ENCODE measurements at regions of chr17 and their contacts with region 1.

Region 1: GRCh38 chr17:40937384-40937819 is at the start of gene KRT23:
- DNase-seq: peak; percentile 87
- H3K4me3 Mint-ChIP-seq: peak within 1 kb of the TSS; percentile 71
- H3K27ac Mint-ChIP-seq: peak within 1 kb of the TSS; percentile 96
- H3K4me1 Mint-ChIP-seq: peaks cover 43% of the 10 kb centered on the region
- H3K27me3 Mint-ChIP-seq: no peaks in the 10 kb centered on the region
- CTCF ChIP-seq: no peak
- total RNA-seq, gene KRT23: 1,389 and 1,709 TPM in 2 replicates

Region 2: GRCh38 chr17:40915199-40915661 is 22.2 kb before region 1 on chr17:
- CTCF ChIA-PET with region 1: interaction called, 13 read pairs
- intact Hi-C with region 1: loop called (anchors 1 kb)
- DNase-seq: no peak
- H3K4me3 Mint-ChIP-seq: peak overlapping the region; percentile 31
- H3K27ac Mint-ChIP-seq: peak overlapping the region; percentile 96
- H3K4me1 Mint-ChIP-seq: peaks cover 84% of the 10 kb centered on the region
- H3K27me3 Mint-ChIP-seq: no peaks in the 10 kb centered on the region
- CTCF ChIP-seq: no peak

Region 3: DNA sequence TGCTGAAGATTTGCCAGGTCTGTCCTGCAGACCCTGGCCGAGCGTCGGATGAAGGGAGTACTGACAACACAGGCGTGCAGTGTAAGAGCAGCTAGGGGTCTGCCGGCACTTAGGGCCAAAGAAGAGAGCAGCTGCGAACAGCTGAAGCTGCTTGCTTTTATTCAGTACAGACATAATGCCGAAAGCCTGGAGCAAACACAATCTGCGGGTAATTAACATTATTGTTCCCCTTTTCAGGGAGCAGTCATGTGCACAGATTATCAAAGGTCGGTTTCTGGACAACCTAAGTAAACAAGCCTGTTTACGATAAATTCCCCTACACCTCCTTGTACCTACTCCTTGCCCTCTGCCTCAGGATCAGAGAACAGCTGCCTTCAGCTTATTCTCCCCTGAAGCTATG is 12.0 kb after region 1 on chr17:
- CTCF ChIA-PET with region 1: interaction called, 48 read pairs
- intact Hi-C with region 1: loop called (anchors 1 kb)
- DNase-seq: peak; percentile 22
- H3K4me3 Mint-ChIP-seq: peak overlapping the region; percentile 27
- H3K27ac Mint-ChIP-seq: peak overlapping the region; percentile 13
- H3K4me1 Mint-ChIP-seq: peaks cover 90% of the 10 kb centered on the region
- H3K27me3 Mint-ChIP-seq: no peaks in the 10 kb centered on the region
- CTCF ChIP-seq: no peak

Region 4: DNA sequence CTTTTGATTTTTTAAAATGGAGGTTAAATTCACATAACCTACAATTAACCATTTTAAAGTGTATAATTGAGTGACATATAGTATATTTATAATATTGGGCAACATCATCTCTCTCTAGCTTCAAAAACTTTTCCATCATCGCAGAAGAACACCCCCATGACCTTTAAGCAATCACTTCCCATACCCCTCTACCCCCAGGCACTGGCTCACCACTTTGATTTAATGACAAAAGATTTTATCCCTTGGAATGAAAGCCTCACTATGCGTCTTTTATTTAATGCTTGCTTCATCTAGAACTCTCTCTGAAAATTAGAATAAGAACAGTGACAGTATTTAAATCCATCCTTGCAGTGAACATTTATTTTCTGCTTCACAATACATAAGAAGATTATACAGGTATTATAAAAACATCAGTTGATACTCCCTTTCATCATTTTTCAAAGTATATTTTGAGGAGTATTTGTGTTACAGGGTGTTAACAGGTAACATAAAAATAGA is 100.5 kb after region 1 on chr17:
- CTCF ChIA-PET with region 1: interaction called, 7 read pairs
- intact Hi-C with region 1: loop called (anchors 1 kb)
- DNase-seq: no peak
- H3K4me3 Mint-ChIP-seq: no peak overlapping the region
- H3K27ac Mint-ChIP-seq: no peak overlapping the region
- H3K4me1 Mint-ChIP-seq: peaks cover 49% of the 10 kb centered on the region
- H3K27me3 Mint-ChIP-seq: no peaks in the 10 kb centered on the region
- CTCF ChIP-seq: no peak

Region 5: GRCh38 chr17:41521574-41522261 is 584.3 kb after region 1 on chr17:
- CTCF ChIA-PET with region 1: no interaction called
- intact Hi-C with region 1: loop called (anchors 10 kb)
- DNase-seq: peak; percentile 100
- H3K4me3 Mint-ChIP-seq: peak overlapping the region; percentile 95
- H3K27ac Mint-ChIP-seq: peak overlapping the region; percentile 99
- H3K4me1 Mint-ChIP-seq: peaks cover 73% of the 10 kb centered on the region
- H3K27me3 Mint-ChIP-seq: no peaks in the 10 kb centered on the region
- CTCF ChIP-seq: peak; percentile 11

Measured in Calu3 (cell line).